ENCODE measurements at regions of chr12 and their contacts with region 1.

Region 1: DNA sequence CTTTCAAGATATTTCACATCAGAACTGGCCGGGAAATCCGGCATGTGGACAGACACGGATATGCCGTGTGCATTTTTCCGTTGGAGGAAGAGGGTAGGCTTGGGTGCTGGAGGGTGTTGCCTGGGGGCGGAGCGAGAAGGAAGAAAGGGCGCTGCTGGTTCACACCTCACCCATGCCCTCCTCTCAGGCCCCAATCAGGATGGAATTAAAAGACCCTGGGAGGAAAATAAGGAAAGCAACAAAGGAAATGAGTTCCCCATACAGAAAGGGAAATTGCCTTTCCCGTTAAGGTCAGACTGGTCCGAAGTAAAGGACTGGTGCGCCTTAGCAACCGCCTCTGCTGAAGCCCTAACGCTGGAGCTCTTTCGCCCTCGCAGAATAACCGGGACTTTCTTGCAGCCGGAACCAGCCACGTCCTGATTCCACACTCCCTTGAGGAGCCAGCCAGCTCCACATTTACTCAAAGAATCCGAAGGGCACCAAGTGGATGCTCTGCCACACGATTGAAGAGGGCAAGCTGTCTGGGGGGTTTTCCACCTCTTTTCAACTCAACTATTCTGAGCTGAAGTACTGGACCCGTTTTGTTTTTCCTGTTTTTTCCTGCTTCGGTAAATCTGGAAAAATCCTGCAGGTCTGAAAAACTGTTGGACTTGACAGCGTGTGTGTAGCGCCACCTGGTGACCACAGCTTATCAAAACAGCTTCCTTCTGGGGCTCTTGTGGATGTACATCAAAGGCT is 37.7 kb upstream of the BCL2L14 start:
- DNase-seq: peak; percentile 68
- H3K4me3 ChIP-seq: peak overlapping the region in 1 of 2 experiments; percentile 31; a peak in 2 of 4 replicates
- H3K27ac ChIP-seq: no peak overlapping the region
- H3K4me1 ChIP-seq: peaks cover 0 to 4% of the 10 kb centered on the region in 2 experiments; a peak in 1 of 4 replicates
- H3K27me3 ChIP-seq: no peaks in the 10 kb centered on the region; the same call in 1 of the 2 replicates
- CTCF ChIP-seq: peak; percentile 87
- EP300 ChIP-seq: no peak
- RAD21 ChIP-seq: peak; percentile 98

Region 2: GRCh38 chr12:11545484-11546330 is 487.3 kb before region 1 on chr12:
- CTCF ChIA-PET with region 1: interaction called, 11 read pairs
- POLR2A ChIA-PET with region 1: no interaction called
- DNase-seq: peak; percentile 47
- H3K4me3 ChIP-seq: no peak overlapping the region
- H3K27ac ChIP-seq: no peak overlapping the region
- H3K4me1 ChIP-seq: peaks cover 5 to 7% of the 10 kb centered on the region in 2 experiments; a peak in 2 of 4 replicates
- H3K27me3 ChIP-seq: no peaks in the 10 kb centered on the region; the same call in 1 of the 2 replicates
- CTCF ChIP-seq: no peak
- EP300 ChIP-seq: no peak
- RAD21 ChIP-seq: no peak

Region 3: GRCh38 chr12:11569716-11570115 is 463.3 kb before region 1 on chr12:
- CTCF ChIA-PET with region 1: interaction called, 11 read pairs
- POLR2A ChIA-PET with region 1: no interaction called
- DNase-seq: no peak
- H3K4me3 ChIP-seq: no peak overlapping the region
- H3K27ac ChIP-seq: no peak overlapping the region
- H3K4me1 ChIP-seq: no peaks in the 10 kb centered on the region
- H3K27me3 ChIP-seq: no peaks in the 10 kb centered on the region; the same call in 1 of the 2 replicates
- CTCF ChIP-seq: no peak
- EP300 ChIP-seq: no peak
- RAD21 ChIP-seq: no peak

Region 4: DNA sequence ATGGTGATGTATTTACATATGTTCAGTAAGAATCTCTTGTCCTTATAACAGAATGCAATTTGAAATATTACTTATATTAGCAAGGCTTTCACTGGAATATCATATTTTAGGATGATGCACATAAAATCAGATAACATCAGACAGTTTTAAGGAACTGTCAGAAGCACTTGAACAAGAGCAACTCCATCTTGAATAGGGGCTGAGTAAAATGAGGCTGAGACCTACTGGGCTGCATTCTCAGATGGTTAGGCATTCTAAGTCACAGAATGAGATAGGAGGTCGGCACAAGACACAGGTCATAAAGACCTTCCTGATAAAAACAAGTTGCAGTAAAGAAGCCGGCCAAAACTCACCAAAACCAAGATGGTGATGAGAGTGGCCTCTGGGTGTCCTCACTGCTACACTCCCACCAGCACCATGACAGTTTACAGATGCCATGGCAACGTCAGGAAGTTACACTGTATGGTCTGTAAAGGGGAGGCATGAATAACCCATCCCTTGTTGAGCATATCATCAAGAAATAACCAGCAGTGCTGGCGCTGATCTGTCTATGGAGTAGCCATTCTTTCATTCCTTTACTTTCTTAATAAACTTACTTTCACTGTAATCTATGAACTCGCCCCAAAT is 411.1 kb before region 1 on chr12:
- CTCF ChIA-PET with region 1: interaction called, 12 read pairs
- POLR2A ChIA-PET with region 1: no interaction called
- DNase-seq: no peak
- H3K4me3 ChIP-seq: no peak overlapping the region
- H3K27ac ChIP-seq: no peak overlapping the region
- H3K4me1 ChIP-seq: no peaks in the 10 kb centered on the region; a peak in 1 of 4 replicates
- H3K27me3 ChIP-seq: no peaks in the 10 kb centered on the region
- CTCF ChIP-seq: peak; percentile 19; the same call in 1 of the 2 replicates
- EP300 ChIP-seq: no peak
- RAD21 ChIP-seq: peak; percentile 47

Region 5: GRCh38 chr12:12008931-12009611 is 23.9 kb before region 1 on chr12:
- CTCF ChIA-PET with region 1: interaction called, 10 read pairs
- POLR2A ChIA-PET with region 1: no interaction called
- DNase-seq: no peak
- H3K4me3 ChIP-seq: no peak overlapping the region
- H3K27ac ChIP-seq: no peak overlapping the region
- H3K4me1 ChIP-seq: peaks cover 16 to 24% of the 10 kb centered on the region in 2 experiments; a peak in 3 of 4 replicates
- H3K27me3 ChIP-seq: no peaks in the 10 kb centered on the region
- CTCF ChIP-seq: no peak
- EP300 ChIP-seq: no peak
- RAD21 ChIP-seq: peak; percentile 9; the same call in 1 of the 2 replicates

Region 6: DNA sequence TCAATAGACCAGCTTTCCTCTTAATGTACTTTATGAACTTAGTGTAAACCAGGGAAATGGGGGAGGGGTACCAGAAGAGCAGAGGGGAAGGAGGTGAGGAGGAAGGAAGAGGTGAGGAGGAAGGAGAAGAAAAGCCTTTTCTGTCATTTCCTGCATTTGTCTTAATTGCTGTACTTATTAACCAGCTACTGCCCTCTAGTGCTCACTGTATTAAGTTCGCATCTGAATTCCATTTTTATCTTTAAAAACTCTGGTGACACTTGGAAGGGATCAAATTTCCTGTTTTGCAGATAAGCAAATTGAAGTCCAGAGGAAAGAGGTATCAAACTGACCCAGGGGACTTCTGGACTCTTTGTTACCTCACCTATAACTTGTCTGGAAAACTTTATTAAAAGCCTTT is 294.8 kb after region 1 on chr12:
- CTCF ChIA-PET with region 1: interaction called, 24 read pairs
- POLR2A ChIA-PET with region 1: no interaction called
- DNase-seq: peak; percentile 64
- H3K4me3 ChIP-seq: no peak overlapping the region; a peak in 1 of 4 replicates
- H3K27ac ChIP-seq: no peak overlapping the region
- H3K4me1 ChIP-seq: peaks cover 0 to 5% of the 10 kb centered on the region in 2 experiments; a peak in 2 of 4 replicates
- H3K27me3 ChIP-seq: no peaks in the 10 kb centered on the region
- CTCF ChIP-seq: peak; percentile 84
- EP300 ChIP-seq: no peak
- RAD21 ChIP-seq: peak; percentile 91